ENCODE measurements at regions of chr19 and their contacts with region 1.

Region 1: GRCh38 chr19:9621156-9622037 is at the start of gene ZNF561:
- DNase-seq: peak; percentile 67
- H3K4me3 ChIP-seq: peak within 1 kb of the TSS; percentile 93
- H3K27ac ChIP-seq: peak within 1 kb of the TSS; percentile 98
- H3K27me3 ChIP-seq: no peaks in the 10 kb centered on the region
- CTCF ChIP-seq: no peak
- polyA plus RNA-seq, gene ZNF561: 31.3 and 39.3 TPM in 2 replicates

Region 2: GRCh38 chr19:9219489-9219888 is 401.9 kb before region 1 on chr19 and contains the start of gene OR7D4:
- CTCF ChIA-PET with region 1: no interaction called
- POLR2A ChIA-PET with region 1: no interaction called
- DNase-seq: no peak
- H3K4me3 ChIP-seq: no peak within 1 kb of the TSS
- H3K27ac ChIP-seq: no peak within 1 kb of the TSS
- H3K27me3 ChIP-seq: no peaks in the 10 kb centered on the region
- CTCF ChIP-seq: no peak
- polyA plus RNA-seq, gene OR7D4: not detected in 2 replicates

Region 3: GRCh38 chr19:9538183-9539058 is 83.0 kb before region 1 on chr19 and contains the start of gene ZNF426:
- CTCF ChIA-PET with region 1: no interaction called
- POLR2A ChIA-PET with region 1: no interaction called
- DNase-seq: peak; percentile 55
- H3K4me3 ChIP-seq: peak within 1 kb of the TSS; percentile 96
- H3K27ac ChIP-seq: peak within 1 kb of the TSS; percentile 99
- H3K27me3 ChIP-seq: no peaks in the 10 kb centered on the region
- CTCF ChIP-seq: no peak
- polyA plus RNA-seq, gene ZNF426: 13.2 and 15.4 TPM in 2 replicates

Region 4: GRCh38 chr19:9584073-9584833 is 37.1 kb before region 1 on chr19 and contains the start of gene ZNF121:
- CTCF ChIA-PET with region 1: interaction called, 13 read pairs
- POLR2A ChIA-PET with region 1: no interaction called
- DNase-seq: peak; percentile 34
- H3K4me3 ChIP-seq: peak within 1 kb of the TSS; percentile 96
- H3K27ac ChIP-seq: peak within 1 kb of the TSS; percentile 79
- H3K27me3 ChIP-seq: no peaks in the 10 kb centered on the region
- CTCF ChIP-seq: 0 out of 2 replicates have a peak, but pooled peaks have one; percentile 1
- polyA plus RNA-seq, gene ZNF121: 5.3 and 6.1 TPM in 2 replicates

Region 5: DNA sequence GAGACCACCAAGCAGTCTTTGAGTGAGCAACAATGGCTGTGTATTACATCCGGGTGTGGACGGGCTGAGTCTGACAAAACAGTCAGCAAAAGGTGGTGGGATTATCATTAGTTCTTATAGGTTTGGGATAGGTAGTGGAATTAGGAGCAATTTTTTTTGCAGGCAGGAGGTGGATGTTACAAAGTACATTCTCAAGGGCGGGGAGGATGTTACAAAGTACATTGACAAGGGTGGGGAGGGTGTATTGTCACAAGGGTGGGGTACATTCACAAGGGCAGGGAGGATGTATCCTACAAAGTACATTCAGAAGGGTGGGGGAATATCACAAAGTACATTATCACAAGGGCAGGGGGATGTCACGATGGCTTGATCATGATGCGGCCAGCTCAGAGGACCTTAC is 14.6 kb after region 1 on chr19:
- CTCF ChIA-PET with region 1: interaction called, 16 read pairs
- POLR2A ChIA-PET with region 1: interaction called, 4 read pairs
- DNase-seq: no peak
- H3K4me3 ChIP-seq: no peak overlapping the region
- H3K27ac ChIP-seq: no peak overlapping the region
- H3K27me3 ChIP-seq: no peaks in the 10 kb centered on the region
- CTCF ChIP-seq: no peak

Region 6: GRCh38 chr19:9785367-9786331 is 164.3 kb after region 1 on chr19:
- CTCF ChIA-PET with region 1: interaction called, 60 read pairs
- POLR2A ChIA-PET with region 1: no interaction called
- DNase-seq: peak; percentile 91
- H3K4me3 ChIP-seq: peak overlapping the region; percentile 85
- H3K27ac ChIP-seq: peak overlapping the region; percentile 91
- H3K27me3 ChIP-seq: no peaks in the 10 kb centered on the region
- CTCF ChIP-seq: no peak

Region 7: GRCh38 chr19:9796113-9796773 is 174.8 kb after region 1 on chr19:
- CTCF ChIA-PET with region 1: interaction called, 60 read pairs
- POLR2A ChIA-PET with region 1: interaction called, 4 read pairs
- DNase-seq: peak; percentile 76
- H3K4me3 ChIP-seq: no peak overlapping the region
- H3K27ac ChIP-seq: no peak overlapping the region
- H3K27me3 ChIP-seq: no peaks in the 10 kb centered on the region
- CTCF ChIP-seq: peak; percentile 86

Measured in AG04450 (cell line).